ENCODE measurements at regions of chr4 and their contacts with region 1.

Region 1: GRCh38 chr4:132642016-132642817 is 506.9 kb upstream of the PCDH10 start:
- DNase-seq: peak; percentile 15
- ATAC-seq: no peak
- H3K4me3 Mint-ChIP-seq: no peak overlapping the region
- H3K27ac Mint-ChIP-seq: no peak overlapping the region
- H3K4me1 Mint-ChIP-seq: no peaks in the 10 kb centered on the region
- H3K27me3 Mint-ChIP-seq: no peaks in the 10 kb centered on the region

Region 2: DNA sequence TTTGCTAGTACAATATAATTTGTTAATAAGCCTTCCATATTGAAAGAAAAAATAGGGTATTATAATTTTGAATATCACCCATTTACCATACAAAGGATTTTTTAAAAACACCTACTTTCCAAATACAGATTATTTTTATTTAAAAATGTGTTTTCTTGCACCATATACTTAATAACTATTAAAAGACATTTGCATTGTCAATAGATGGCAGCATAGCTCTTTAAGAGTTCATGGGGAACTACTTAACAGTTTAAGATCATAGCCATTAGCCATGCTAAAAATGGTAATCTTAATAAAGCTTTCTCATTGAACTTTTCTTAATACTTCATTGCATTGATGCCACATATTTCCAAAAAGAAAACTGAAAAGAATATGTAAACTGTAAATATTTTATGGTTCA is 1550.3 kb before region 1 on chr4:
- CTCF ChIA-PET with region 1: no interaction called
- POLR2A ChIA-PET with region 1: no interaction called
- intact Hi-C with region 1: loop called in 1 of 2 experiments (anchors 5 kb)
- DNase-seq: no peak
- ATAC-seq: no peak
- H3K4me3 Mint-ChIP-seq: no peak overlapping the region
- H3K27ac Mint-ChIP-seq: no peak overlapping the region
- H3K4me1 Mint-ChIP-seq: no peaks in the 10 kb centered on the region
- H3K27me3 Mint-ChIP-seq: no peaks in the 10 kb centered on the region

Region 3: DNA sequence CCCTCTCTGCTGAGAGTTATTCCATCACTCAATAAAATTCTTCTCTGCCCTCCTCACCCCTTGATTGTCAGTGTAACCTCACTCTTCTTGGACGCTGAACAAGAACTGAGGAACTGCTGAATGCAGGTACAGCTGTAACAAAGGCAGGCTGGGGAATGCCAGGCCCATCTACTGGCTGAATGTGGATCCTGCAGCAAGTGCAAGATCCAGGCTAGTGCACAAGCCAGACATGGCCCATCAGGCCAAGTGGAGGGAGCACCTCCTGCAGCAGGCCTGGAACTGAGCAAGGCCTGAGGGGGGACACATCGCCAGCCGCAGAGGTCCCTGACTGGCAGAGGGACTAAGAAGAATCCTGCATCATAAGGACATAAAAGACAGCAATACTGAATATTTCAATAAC is 95.1 kb after region 1 on chr4:
- CTCF ChIA-PET with region 1: no interaction called
- POLR2A ChIA-PET with region 1: no interaction called
- intact Hi-C with region 1: no loop called
- DNase-seq: no peak
- ATAC-seq: no peak
- H3K4me3 Mint-ChIP-seq: no peak overlapping the region
- H3K27ac Mint-ChIP-seq: no peak overlapping the region
- H3K4me1 Mint-ChIP-seq: no peaks in the 10 kb centered on the region
- H3K27me3 Mint-ChIP-seq: no peaks in the 10 kb centered on the region